ENCODE measurements at regions of chr1 and their contacts with region 1.

Region 1: DNA sequence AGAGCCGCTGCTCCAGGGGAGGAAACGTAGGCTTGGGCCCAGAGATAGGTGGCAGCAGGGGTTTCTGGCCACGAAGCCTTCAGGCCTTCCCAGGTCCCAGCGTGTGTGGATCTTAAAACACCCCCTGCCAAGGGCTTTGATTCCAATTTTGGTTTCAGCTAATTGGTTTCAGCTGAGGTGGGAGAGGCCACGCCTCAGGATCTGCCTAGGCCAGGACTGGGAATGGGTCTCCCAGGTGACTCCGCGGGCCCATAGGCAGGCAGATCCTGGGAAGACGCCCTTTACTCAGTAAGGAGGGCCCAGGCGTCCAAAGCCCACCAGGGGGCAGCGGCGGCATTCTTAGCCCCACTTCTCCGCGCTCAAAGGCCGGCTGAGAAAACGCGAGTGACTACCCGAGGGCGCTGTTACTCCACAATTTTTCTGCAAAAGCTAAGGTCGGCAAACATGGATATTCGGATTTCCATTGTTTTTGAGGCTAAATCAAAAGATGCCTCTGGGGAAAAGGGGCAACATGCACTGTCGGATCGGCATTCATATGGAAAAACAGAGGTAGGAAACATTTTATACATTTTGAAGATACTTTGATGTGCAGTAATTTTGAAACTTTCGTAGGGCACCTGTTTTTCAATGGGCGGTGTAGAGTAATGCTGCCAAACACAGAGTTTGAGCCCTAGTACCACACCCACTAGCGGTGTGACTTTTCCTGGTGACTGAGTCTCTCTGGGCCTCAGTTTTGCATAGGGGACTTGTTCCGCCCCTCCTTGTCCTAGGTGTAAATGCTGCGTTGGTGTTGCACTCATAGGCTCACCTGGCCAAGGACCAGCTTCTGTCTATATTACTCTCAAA is 31.8 kb upstream of the BCL10 start:
- DNase-seq: peak; percentile 95
- H3K4me3 ChIP-seq: peak overlapping the region in 1 of 4 donors; percentile 2
- H3K27ac ChIP-seq: peak overlapping the region in 1 of 4 donors; percentile 33
- H3K4me1 ChIP-seq: peaks cover 5 to 11% (median 9%) of the 10 kb centered on the region in 4 donors
- H3K27me3 ChIP-seq: no peaks in the 10 kb centered on the region
- CTCF ChIP-seq: peak; percentile 94 to 97 (median 97)
- EP300 ChIP-seq: no peak
- POLR2A ChIP-seq: no peak

Region 2: DNA sequence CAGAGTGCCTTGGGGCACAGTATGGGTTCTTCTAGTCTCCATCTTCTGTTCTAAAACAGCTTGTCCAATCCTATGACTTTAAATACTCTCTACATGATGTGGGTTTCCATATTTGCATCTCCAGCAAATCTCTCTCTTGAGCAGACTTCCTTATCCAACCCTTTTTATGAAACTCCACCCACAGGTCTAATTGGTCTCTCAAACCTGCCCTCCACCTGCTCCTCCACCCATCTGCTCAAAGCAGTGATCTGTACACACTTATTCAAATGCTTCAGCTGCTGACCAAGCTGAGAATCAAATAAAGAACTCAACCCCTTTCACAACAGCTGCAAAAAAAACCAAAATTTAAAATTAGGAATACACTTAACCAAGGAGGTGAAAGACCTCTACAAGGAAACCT is 322.8 kb before region 1 on chr1:
- intact Hi-C with region 1: no loop called
- DNase-seq: no peak
- H3K4me3 ChIP-seq: no peak overlapping the region
- H3K27ac ChIP-seq: no peak overlapping the region
- H3K4me1 ChIP-seq: no peaks in the 10 kb centered on the region
- H3K27me3 ChIP-seq: no peaks in the 10 kb centered on the region
- CTCF ChIP-seq: no peak
- EP300 ChIP-seq: no peak
- POLR2A ChIP-seq: no peak

Region 3: DNA sequence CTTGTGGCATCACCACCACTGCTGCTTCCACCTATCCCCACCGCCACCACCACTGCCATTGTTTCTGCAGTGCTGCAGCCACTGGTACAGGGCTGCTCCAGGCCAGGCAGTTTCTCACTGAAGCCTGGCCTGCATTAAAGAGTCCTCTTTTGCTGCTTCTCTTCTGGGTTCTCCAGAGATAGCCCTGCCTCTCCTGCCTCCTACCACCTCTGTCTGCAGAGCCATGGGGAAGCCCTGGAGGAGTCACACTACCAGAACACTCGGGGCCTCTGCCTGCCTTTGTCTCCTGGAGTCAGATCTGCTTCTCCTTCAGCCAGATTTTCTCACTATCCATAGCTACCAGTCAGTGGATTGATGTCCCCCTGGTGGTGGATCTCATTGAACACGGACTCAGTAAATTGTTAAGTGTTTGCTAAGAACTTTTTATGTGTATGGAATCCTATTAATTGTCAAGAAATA is 194.4 kb after region 1 on chr1:
- intact Hi-C with region 1: loop called (anchors 5 kb)
- DNase-seq: no peak
- H3K4me3 ChIP-seq: no peak overlapping the region
- H3K27ac ChIP-seq: no peak overlapping the region
- H3K4me1 ChIP-seq: peaks cover 0 to 4% (median 2%) of the 10 kb centered on the region in 4 donors
- H3K27me3 ChIP-seq: no peaks in the 10 kb centered on the region
- CTCF ChIP-seq: peak; percentile 36 to 51 (median 43)
- EP300 ChIP-seq: no peak
- POLR2A ChIP-seq: no peak

Region 4: GRCh38 chr1:85580872-85581801 is 272.9 kb after region 1 on chr1:
- intact Hi-C with region 1: loop called (anchors 5 kb)
- DNase-seq: peak; percentile 93
- H3K4me3 ChIP-seq: peak overlapping the region; percentile 80 to 91 (median 88)
- H3K27ac ChIP-seq: peak overlapping the region; percentile 99 to 100 (median 99)
- H3K4me1 ChIP-seq: peaks cover 32 to 66% (median 52%) of the 10 kb centered on the region in 4 donors
- H3K27me3 ChIP-seq: peaks cover 0 to 4% (median 0%) of the 10 kb centered on the region in 4 donors
- CTCF ChIP-seq: peak; percentile 71 to 89 (median 86)
- EP300 ChIP-seq: no peak
- POLR2A ChIP-seq: no peak

Measured in esophagus muscularis mucosa (tissue), 4 donors.